ENCODE measurements at regions of chr14 and their contacts with region 1.

Region 1: DNA sequence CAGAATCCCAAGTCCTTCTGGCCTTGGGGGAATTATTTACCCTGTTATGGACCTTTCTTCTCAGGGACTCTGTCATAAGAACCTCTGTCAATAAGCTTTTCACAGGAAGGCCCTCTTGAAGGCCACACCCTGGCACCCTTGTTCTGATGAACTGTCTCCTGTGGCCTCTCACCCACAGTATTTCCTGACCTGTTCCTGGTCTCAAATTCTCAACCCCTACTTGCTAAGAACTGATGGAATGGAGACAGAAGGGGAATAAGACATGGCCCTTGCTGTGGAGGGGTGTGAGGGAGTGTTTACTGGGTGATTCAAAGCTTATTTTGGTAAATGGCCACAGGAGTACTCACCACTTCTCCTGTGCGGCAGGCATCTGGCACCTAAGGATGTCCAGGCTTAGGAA is 1082.9 kb downstream of the BCL11B start:
- DNase-seq: no peak
- ATAC-seq: peak; percentile 54
- H3K4me3 Mint-ChIP-seq: peak overlapping the region; percentile 75
- H3K27ac Mint-ChIP-seq: peak overlapping the region; percentile 97
- H3K4me1 Mint-ChIP-seq: peaks cover 88% of the 10 kb centered on the region
- H3K27me3 Mint-ChIP-seq: no peaks in the 10 kb centered on the region

Region 2: GRCh38 chr14:98035396-98035795 is 153.7 kb before region 1 on chr14:
- POLR2A ChIA-PET with region 1: no interaction called
- DNase-seq: no peak
- ATAC-seq: no peak
- H3K4me3 Mint-ChIP-seq: no peak overlapping the region
- H3K27ac Mint-ChIP-seq: no peak overlapping the region
- H3K4me1 Mint-ChIP-seq: no peaks in the 10 kb centered on the region
- H3K27me3 Mint-ChIP-seq: no peaks in the 10 kb centered on the region

Region 3: DNA sequence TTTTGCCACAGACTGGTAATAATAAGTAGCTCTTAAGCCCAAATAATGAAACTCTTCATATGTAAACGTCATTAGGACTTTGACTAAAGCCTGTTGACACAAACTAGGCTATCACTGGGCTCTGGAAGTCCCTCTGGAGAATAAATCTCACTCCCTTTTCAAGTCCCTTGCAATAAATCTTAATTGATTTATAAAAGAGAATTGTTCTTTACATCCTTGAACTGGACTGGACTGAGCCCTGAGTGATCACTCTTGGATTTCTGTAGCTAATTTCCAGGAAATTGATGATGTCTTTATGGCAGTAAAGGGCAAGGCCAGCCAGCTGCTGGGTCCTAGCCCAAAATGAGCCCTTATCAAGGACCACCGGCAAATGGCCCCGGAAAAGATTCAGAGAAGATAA is 79.7 kb before region 1 on chr14:
- POLR2A ChIA-PET with region 1: no interaction called
- DNase-seq: no peak
- ATAC-seq: no peak
- H3K4me3 Mint-ChIP-seq: no peak overlapping the region
- H3K27ac Mint-ChIP-seq: no peak overlapping the region
- H3K4me1 Mint-ChIP-seq: no peaks in the 10 kb centered on the region
- H3K27me3 Mint-ChIP-seq: peaks cover 3% of the 10 kb centered on the region

Region 4: DNA sequence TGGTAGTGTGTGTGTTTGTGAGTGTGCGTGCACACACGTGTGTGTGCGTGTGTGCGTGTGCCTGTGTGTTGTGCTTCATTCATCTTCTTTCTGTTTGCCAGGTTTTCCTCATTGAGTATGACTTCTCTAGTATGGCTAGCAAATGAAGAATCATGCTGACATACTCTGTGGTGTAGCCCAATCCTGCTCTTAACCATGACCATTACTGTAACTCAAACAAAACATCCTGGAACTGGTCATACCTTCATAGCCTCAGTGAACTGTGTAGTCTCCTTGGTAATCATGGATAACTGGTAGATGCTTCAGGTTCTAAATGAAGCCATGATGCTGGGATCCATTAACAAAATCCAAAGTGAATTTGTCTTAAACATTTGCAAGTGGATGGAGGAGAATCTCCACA is 34.8 kb before region 1 on chr14:
- POLR2A ChIA-PET with region 1: no interaction called
- DNase-seq: no peak
- ATAC-seq: peak; percentile 34
- H3K4me3 Mint-ChIP-seq: no peak overlapping the region
- H3K27ac Mint-ChIP-seq: no peak overlapping the region
- H3K4me1 Mint-ChIP-seq: peaks cover 31% of the 10 kb centered on the region
- H3K27me3 Mint-ChIP-seq: no peaks in the 10 kb centered on the region

Region 5: DNA sequence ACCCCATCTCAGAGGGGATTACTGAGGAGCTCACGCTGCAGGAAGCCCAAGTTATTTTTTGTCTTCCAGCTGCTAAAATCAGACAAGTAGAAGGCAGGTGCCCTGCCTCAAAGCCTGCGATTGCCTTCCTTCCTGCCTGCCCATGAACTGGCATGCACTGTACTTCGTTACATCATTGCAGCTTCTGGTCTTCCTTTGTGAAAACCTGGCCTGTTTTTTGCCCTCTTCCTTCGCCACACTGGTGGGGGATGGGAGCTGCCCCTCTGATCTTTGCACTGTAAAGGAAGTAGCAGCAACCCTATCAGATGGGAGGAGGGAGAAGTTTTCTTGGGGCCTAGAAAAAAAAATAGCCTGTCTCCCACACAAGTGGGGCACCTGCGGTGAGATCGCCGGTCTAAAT is 15.8 kb before region 1 on chr14:
- POLR2A ChIA-PET with region 1: interaction called, 33 read pairs
- DNase-seq: peak; percentile 64
- ATAC-seq: peak; percentile 48
- H3K4me3 Mint-ChIP-seq: peak overlapping the region; percentile 69
- H3K27ac Mint-ChIP-seq: peak overlapping the region; percentile 93
- H3K4me1 Mint-ChIP-seq: peaks cover 89% of the 10 kb centered on the region
- H3K27me3 Mint-ChIP-seq: no peaks in the 10 kb centered on the region

Region 6: DNA sequence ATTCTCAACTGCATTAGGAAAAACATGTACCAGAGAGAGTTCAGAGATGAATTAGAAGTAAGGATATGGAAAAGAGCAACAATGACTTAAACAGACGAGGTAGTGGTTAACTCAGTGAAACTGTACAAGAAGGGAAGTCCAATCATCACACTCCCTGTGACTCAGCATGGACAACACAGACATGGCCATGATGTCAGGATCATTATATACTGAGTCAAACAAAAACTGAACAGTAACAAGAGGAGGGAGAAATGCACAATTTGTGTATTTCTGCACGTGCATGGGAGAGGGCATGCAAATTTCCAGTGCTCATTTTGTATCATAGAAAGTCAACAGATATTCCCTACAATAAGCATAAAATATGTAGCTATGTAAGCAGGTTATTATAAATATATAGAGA is 45.1 kb after region 1 on chr14:
- POLR2A ChIA-PET with region 1: no interaction called
- DNase-seq: no peak
- ATAC-seq: no peak
- H3K4me3 Mint-ChIP-seq: no peak overlapping the region
- H3K27ac Mint-ChIP-seq: no peak overlapping the region
- H3K4me1 Mint-ChIP-seq: peaks cover 19% of the 10 kb centered on the region
- H3K27me3 Mint-ChIP-seq: no peaks in the 10 kb centered on the region